Activated naive CD4-positive, alpha-beta T cell treated with anti-CD3 and anti-CD28 coated beads for 36 hours (primary cell): ENCODE measurements at regions of chr1 and their contacts with region 1.

Region 1: GRCh38 chr1:203172128-203173010 is 3.3 kb downstream of the MYBPH start:
- DNase-seq: peak; percentile 61
- H3K4me3 Mint-ChIP-seq: no peak overlapping the region
- H3K27ac Mint-ChIP-seq: no peak overlapping the region
- H3K4me1 Mint-ChIP-seq: no peaks in the 10 kb centered on the region
- H3K27me3 Mint-ChIP-seq: no peaks in the 10 kb centered on the region

Region 2: GRCh38 chr1:203117611-203118575 is 54.5 kb before region 1 on chr1:
- CTCF ChIA-PET with region 1: interaction called, 13 read pairs
- intact Hi-C with region 1: loop called (anchors 2 kb)
- DNase-seq: peak; percentile 57
- H3K4me3 Mint-ChIP-seq: no peak overlapping the region
- H3K27ac Mint-ChIP-seq: no peak overlapping the region
- H3K4me1 Mint-ChIP-seq: no peaks in the 10 kb centered on the region
- H3K27me3 Mint-ChIP-seq: peaks cover 41% of the 10 kb centered on the region